ENCODE measurements at regions of chr3 and their contacts with region 1.

Region 1: DNA sequence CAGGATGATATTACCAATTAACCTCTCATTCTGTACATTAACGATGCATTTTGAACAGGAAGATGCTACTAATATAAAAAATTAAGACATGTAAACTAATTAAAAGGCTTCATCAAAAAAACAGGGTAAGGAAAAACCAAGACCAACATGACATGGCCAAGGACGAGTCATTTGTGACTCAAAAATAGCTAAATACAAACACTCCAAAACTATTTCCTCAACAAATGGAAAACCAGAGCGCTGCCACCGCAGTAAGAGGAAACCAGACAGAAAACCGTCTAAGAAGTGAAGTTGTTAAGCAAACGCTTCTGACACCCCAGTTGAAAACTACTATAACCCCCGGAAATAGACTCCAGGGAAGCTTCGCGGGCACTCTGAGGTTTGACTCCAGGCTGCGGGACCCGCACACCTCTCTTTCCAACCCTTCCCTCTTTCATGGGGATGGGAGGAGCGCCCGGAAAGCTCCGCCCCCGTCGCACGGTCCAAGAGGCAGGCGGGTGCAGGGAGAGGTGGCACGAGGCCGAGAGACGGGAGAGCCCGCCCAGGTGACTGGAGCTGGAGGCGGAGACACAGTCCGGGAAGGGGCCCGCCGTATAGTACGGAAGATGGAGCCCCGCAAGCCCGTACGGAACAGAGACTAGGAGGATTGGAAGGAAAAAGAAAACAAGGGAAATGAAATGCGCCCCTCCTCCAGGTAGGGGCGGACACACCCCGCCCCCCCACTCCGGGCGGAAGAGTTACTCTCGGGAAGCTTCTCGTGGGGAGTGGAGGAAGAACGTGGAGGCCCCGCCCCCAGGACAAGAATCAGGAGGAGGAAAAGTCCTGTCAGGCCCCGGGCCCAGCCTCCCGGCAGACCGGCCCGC is 708 bp downstream of the DCAF1 start:
- DNase-seq: peak; percentile 73 to 87 (median 78)
- H3K4me3 ChIP-seq: peak overlapping the region; percentile 86
- H3K4me3 Mint-ChIP-seq: peak overlapping the region; percentile 87 to 94 (median 91)
- H3K27ac ChIP-seq: peak overlapping the region; percentile 86
- H3K27ac Mint-ChIP-seq: peak overlapping the region; percentile 91 to 99 (median 98)
- H3K4me1 ChIP-seq: peaks cover 11% of the 10 kb centered on the region
- H3K4me1 Mint-ChIP-seq: peaks cover 18 to 36% (median 34%) of the 10 kb centered on the region in 3 donors
- H3K27me3 ChIP-seq: no peaks in the 10 kb centered on the region
- H3K27me3 Mint-ChIP-seq: peaks cover 0 to 5% of the 10 kb centered on the region in 2 donors

Region 2: GRCh38 chr3:51384726-51385473 is 114.2 kb before region 1 on chr3 and contains the start of gene MANF:
- CTCF ChIA-PET with region 1: interaction called, 5 read pairs
- POLR2A ChIA-PET with region 1: interaction called, 40 read pairs
- DNase-seq: peak; percentile 97 to 98 (median 98)
- H3K4me3 ChIP-seq: peak within 1 kb of the TSS; percentile 99
- H3K4me3 Mint-ChIP-seq: peak within 1 kb of the TSS; percentile 95 to 100 (median 99)
- H3K27ac ChIP-seq: peak within 1 kb of the TSS; percentile 95
- H3K27ac Mint-ChIP-seq: peak within 1 kb of the TSS; percentile 95 to 100 (median 100)
- H3K4me1 ChIP-seq: peaks cover 46% of the 10 kb centered on the region
- H3K4me1 Mint-ChIP-seq: peaks cover 41 to 54% (median 53%) of the 10 kb centered on the region in 3 donors
- H3K27me3 ChIP-seq: no peaks in the 10 kb centered on the region
- H3K27me3 Mint-ChIP-seq: peaks cover 0 to 2% of the 10 kb centered on the region in 2 donors
- total RNA-seq, gene MANF: 197 to 204 TPM

Region 3: GRCh38 chr3:51477360-51477711 is 21.8 kb before region 1 on chr3:
- CTCF ChIA-PET with region 1: no interaction called
- POLR2A ChIA-PET with region 1: no interaction called
- DNase-seq: no peak
- H3K4me3 ChIP-seq: no peak overlapping the region
- H3K4me3 Mint-ChIP-seq: no peak overlapping the region
- H3K27ac ChIP-seq: no peak overlapping the region
- H3K27ac Mint-ChIP-seq: peak overlapping the region in 2 of 8 donors; percentile 17 to 23
- H3K4me1 ChIP-seq: no peaks in the 10 kb centered on the region
- H3K4me1 Mint-ChIP-seq: peaks cover 0 to 4% (median 2%) of the 10 kb centered on the region in 3 donors
- H3K27me3 ChIP-seq: no peaks in the 10 kb centered on the region
- H3K27me3 Mint-ChIP-seq: no peaks in the 10 kb centered on the region

Region 4: GRCh38 chr3:51538459-51539290 is 39.6 kb after region 1 on chr3 and contains the start of gene RAD54L2:
- CTCF ChIA-PET with region 1: interaction called, 12 read pairs
- POLR2A ChIA-PET with region 1: interaction called, 6 read pairs
- DNase-seq: peak; percentile 58 to 79 (median 67)
- H3K4me3 ChIP-seq: peak within 1 kb of the TSS; percentile 97
- H3K4me3 Mint-ChIP-seq: peak within 1 kb of the TSS; percentile 80 to 96 (median 94)
- H3K27ac ChIP-seq: peak within 1 kb of the TSS; percentile 80
- H3K27ac Mint-ChIP-seq: peak within 1 kb of the TSS; percentile 86 to 98 (median 94)
- H3K4me1 ChIP-seq: peaks cover 21% of the 10 kb centered on the region
- H3K4me1 Mint-ChIP-seq: peaks cover 43 to 52% (median 44%) of the 10 kb centered on the region in 3 donors
- H3K27me3 ChIP-seq: no peaks in the 10 kb centered on the region
- H3K27me3 Mint-ChIP-seq: peaks cover 0 to 3% of the 10 kb centered on the region in 2 donors
- total RNA-seq, gene RAD54L2: 35.3 to 36.2 TPM

Region 5: GRCh38 chr3:51682079-51682478 is 183.0 kb after region 1 on chr3:
- CTCF ChIA-PET with region 1: interaction called, 188 read pairs
- POLR2A ChIA-PET with region 1: interaction called, 89 read pairs
- DNase-seq: peak; percentile 49 to 82 (median 81)
- H3K4me3 ChIP-seq: peak overlapping the region; percentile 47
- H3K4me3 Mint-ChIP-seq: peak overlapping the region; percentile 13 to 81 (median 71)
- H3K27ac ChIP-seq: peak overlapping the region; percentile 5
- H3K27ac Mint-ChIP-seq: peak overlapping the region; percentile 59 to 91 (median 85)
- H3K4me1 ChIP-seq: peaks cover 98% of the 10 kb centered on the region
- H3K4me1 Mint-ChIP-seq: peaks cover 73 to 99% (median 97%) of the 10 kb centered on the region in 3 donors
- H3K27me3 ChIP-seq: no peaks in the 10 kb centered on the region
- H3K27me3 Mint-ChIP-seq: peaks cover 0 to 1% of the 10 kb centered on the region in 2 donors

Region 6: GRCh38 chr3:51974963-51975851 is 476.1 kb after region 1 on chr3 and contains the start of gene ABHD14A:
- CTCF ChIA-PET with region 1: no interaction called
- POLR2A ChIA-PET with region 1: interaction called, 15 read pairs
- DNase-seq: peak; percentile 67 to 84 (median 78)
- H3K4me3 ChIP-seq: peak within 1 kb of the TSS; percentile 97
- H3K4me3 Mint-ChIP-seq: peak within 1 kb of the TSS; percentile 89 to 99 (median 95)
- H3K27ac ChIP-seq: peak within 1 kb of the TSS; percentile 83
- H3K27ac Mint-ChIP-seq: peak within 1 kb of the TSS; percentile 87 to 98 (median 94)
- H3K4me1 ChIP-seq: peaks cover 32% of the 10 kb centered on the region
- H3K4me1 Mint-ChIP-seq: peaks cover 25 to 50% (median 46%) of the 10 kb centered on the region in 3 donors
- H3K27me3 ChIP-seq: no peaks in the 10 kb centered on the region
- H3K27me3 Mint-ChIP-seq: no peaks in the 10 kb centered on the region
- total RNA-seq, gene ABHD14A: 14.4 to 16.0 TPM